GM12878 (cell line): ENCODE measurements at regions of chr1 and their contacts with region 1.

Region 1: GRCh38 chr1:210684466-210685294 is 356.0 kb downstream of the HHAT start:
- DNase-seq: peak; percentile 51
- ATAC-seq: peak; percentile 96
- H3K4me3 ChIP-seq: no peak overlapping the region
- H3K27ac ChIP-seq: peak overlapping the region; percentile 70
- H3K4me1 ChIP-seq: peaks cover 19% of the 10 kb centered on the region
- H3K27me3 ChIP-seq: no peaks in the 10 kb centered on the region
- CTCF ChIP-seq: no peak
- EP300 ChIP-seq: no peak
- POLR2A ChIP-seq: no peak
- RAD21 ChIP-seq: no peak

Region 2: DNA sequence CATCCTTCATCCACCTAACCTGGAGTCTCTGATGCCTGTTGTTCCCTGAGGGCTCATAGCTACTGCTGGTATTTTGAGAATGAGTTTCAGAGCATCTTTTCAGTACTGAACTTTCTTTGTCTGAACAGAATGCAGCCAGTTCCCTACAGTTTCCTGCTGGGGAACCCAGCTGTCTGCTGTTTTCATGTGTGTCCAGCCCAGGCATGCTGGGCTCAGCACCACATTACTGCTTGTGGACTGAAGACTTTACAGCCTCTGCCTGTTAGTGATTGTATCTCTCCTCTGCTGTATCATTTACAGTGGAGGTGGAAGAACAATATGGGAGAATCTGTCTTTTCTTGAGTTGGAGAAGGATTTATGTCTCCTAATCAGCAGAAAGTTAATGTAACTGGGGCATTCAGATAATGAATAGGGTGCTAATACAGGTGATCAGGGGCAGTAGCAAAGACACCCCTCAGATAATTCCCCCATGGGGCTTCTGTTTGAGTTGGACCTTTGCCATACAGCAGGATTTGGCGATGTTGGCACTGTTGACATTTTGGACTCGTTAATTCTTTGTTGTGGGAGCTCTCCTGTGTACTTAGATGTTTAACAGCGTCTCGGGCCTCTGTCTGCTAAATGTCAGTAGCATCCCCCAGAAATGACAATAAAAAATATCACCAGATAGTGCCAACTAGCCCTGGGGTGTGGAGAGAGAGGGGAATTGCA is 148.3 kb before region 1 on chr1:
- CTCF ChIA-PET with region 1: no interaction called
- POLR2A ChIA-PET with region 1: no interaction called
- RAD21 ChIA-PET with region 1: no interaction called
- SMC1A ChIA-PET with region 1: no interaction called
- in situ Hi-C with region 1: no loop called
- intact Hi-C with region 1: no loop called
- DNase-seq: no peak
- ATAC-seq: no peak
- H3K4me3 ChIP-seq: no peak overlapping the region
- H3K27ac ChIP-seq: no peak overlapping the region
- H3K4me1 ChIP-seq: no peaks in the 10 kb centered on the region
- H3K27me3 ChIP-seq: no peaks in the 10 kb centered on the region
- CTCF ChIP-seq: no peak
- EP300 ChIP-seq: no peak
- POLR2A ChIP-seq: no peak
- RAD21 ChIP-seq: no peak

Region 3: GRCh38 chr1:210663730-210664573 is 20.7 kb before region 1 on chr1:
- CTCF ChIA-PET with region 1: no interaction called
- POLR2A ChIA-PET with region 1: no interaction called
- RAD21 ChIA-PET with region 1: no interaction called
- SMC1A ChIA-PET with region 1: interaction called, 10 read pairs
- in situ Hi-C with region 1: no loop called
- intact Hi-C with region 1: no loop called
- DNase-seq: no peak
- ATAC-seq: peak; percentile 61
- H3K4me3 ChIP-seq: no peak overlapping the region
- H3K27ac ChIP-seq: no peak overlapping the region
- H3K4me1 ChIP-seq: 0 out of 2 replicates have a peak, but pooled peaks cover 2% of the 10 kb centered on the region
- H3K27me3 ChIP-seq: no peaks in the 10 kb centered on the region
- CTCF ChIP-seq: no peak
- EP300 ChIP-seq: no peak
- POLR2A ChIP-seq: no peak
- RAD21 ChIP-seq: no peak

Region 4: GRCh38 chr1:210696709-210697108 is 12.0 kb after region 1 on chr1:
- CTCF ChIA-PET with region 1: interaction called, 13 read pairs
- POLR2A ChIA-PET with region 1: interaction called, 5 read pairs
- RAD21 ChIA-PET with region 1: interaction called, 12 read pairs
- SMC1A ChIA-PET with region 1: interaction called, 16 read pairs
- in situ Hi-C with region 1: no loop called
- intact Hi-C with region 1: no loop called
- DNase-seq: peak; percentile 67
- ATAC-seq: peak; percentile 96
- H3K4me3 ChIP-seq: peak overlapping the region; percentile 38; the same call in 1 of the 2 replicates
- H3K27ac ChIP-seq: no peak overlapping the region
- H3K4me1 ChIP-seq: peaks cover 20% of the 10 kb centered on the region
- H3K27me3 ChIP-seq: no peaks in the 10 kb centered on the region
- CTCF ChIP-seq: peak in 2 of 3 experiments; percentile 4 to 13; a peak in 1 of 6 replicates
- EP300 ChIP-seq: no peak
- POLR2A ChIP-seq: no peak
- RAD21 ChIP-seq: no peak